ENCODE measurements at regions of chr10 and their contacts with region 1.

Region 1: DNA sequence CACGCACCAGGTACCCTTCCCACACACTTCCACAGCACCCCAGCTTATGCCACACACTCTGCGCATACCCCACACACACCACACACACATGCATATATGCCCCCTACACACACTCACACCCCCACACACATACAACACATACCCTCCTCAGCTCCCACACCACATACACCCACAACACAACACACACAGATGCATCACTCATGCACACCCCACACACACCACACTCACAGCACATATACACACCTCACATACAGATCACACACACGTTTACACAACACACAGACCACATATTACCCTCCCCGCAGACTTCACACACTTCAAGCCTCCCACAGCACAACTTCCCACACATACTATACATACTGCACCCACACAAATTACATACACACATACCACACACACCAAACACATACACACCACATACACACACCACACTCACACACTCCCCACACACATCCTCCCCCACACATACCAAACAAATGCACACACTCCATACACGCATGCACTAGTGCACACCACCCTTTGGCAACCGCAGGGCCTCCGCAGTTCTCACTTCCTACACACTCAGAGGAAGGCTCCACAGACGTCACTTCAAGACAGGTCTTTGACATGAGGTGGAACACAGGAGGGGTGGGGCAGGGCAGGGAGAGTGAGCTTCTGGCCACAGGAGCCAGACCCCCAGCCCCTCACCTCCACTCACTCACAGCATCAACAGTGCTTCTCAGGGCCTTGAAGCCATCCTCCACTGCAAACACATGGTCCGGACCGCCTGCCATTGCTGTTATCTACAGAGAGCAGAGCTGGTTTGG is 18.5 kb upstream of the ANTXRL start:
- DNase-seq: peak in 8 of 9 donors; percentile 31 to 80 (median 62)
- ATAC-seq: peak; percentile 90
- H3K4me3 ChIP-seq: peak overlapping the region; percentile 84
- H3K4me3 Mint-ChIP-seq: no peak overlapping the region
- H3K27ac ChIP-seq: peak overlapping the region; percentile 86
- H3K27ac Mint-ChIP-seq: no peak overlapping the region
- H3K4me1 ChIP-seq: peaks cover 42 to 56% of the 10 kb centered on the region in 2 donors
- H3K4me1 Mint-ChIP-seq: peaks cover 34 to 61% (median 54%) of the 10 kb centered on the region in 7 donors
- H3K27me3 ChIP-seq: no peaks in the 10 kb centered on the region
- H3K27me3 Mint-ChIP-seq: no peaks in the 10 kb centered on the region

Region 2: GRCh38 chr10:46022978-46023702 is 245.1 kb before region 1 on chr10:
- CTCF ChIA-PET with region 1: no interaction called
- POLR2A ChIA-PET with region 1: no interaction called
- intact Hi-C with region 1: loop called in 1 of 2 experiments (anchors 5 kb)
- DNase-seq: peak; percentile 59 to 85 (median 65)
- ATAC-seq: peak; percentile 96
- H3K4me3 ChIP-seq: peak overlapping the region; percentile 60
- H3K4me3 Mint-ChIP-seq: peak overlapping the region; percentile 78 to 95 (median 90)
- H3K27ac ChIP-seq: peak overlapping the region; percentile 75
- H3K27ac Mint-ChIP-seq: peak overlapping the region; percentile 51 to 95 (median 80)
- H3K4me1 ChIP-seq: peaks cover 38 to 55% of the 10 kb centered on the region in 2 donors
- H3K4me1 Mint-ChIP-seq: peaks cover 64 to 100% (median 94%) of the 10 kb centered on the region in 7 donors
- H3K27me3 ChIP-seq: no peaks in the 10 kb centered on the region
- H3K27me3 Mint-ChIP-seq: no peaks in the 10 kb centered on the region

Region 3: GRCh38 chr10:46106410-46107255 is 161.6 kb before region 1 on chr10:
- CTCF ChIA-PET with region 1: no interaction called
- POLR2A ChIA-PET with region 1: no interaction called
- intact Hi-C with region 1: no loop called
- DNase-seq: peak in 8 of 9 donors; percentile 34 to 67 (median 40)
- ATAC-seq: peak; percentile 95
- H3K4me3 ChIP-seq: peak overlapping the region; percentile 54
- H3K4me3 Mint-ChIP-seq: peak overlapping the region; percentile 82 to 98 (median 91)
- H3K27ac ChIP-seq: peak overlapping the region; percentile 72
- H3K27ac Mint-ChIP-seq: peak overlapping the region in 8 of 9 donors; percentile 1 to 93 (median 76)
- H3K4me1 ChIP-seq: peaks cover 6 to 7% of the 10 kb centered on the region in 2 donors
- H3K4me1 Mint-ChIP-seq: peaks cover 10 to 23% (median 17%) of the 10 kb centered on the region in 7 donors
- H3K27me3 ChIP-seq: no peaks in the 10 kb centered on the region
- H3K27me3 Mint-ChIP-seq: peaks cover 0 to 30% (median 0%) of the 10 kb centered on the region in 5 donors

Region 4: GRCh38 chr10:46228563-46229071 is 39.7 kb before region 1 on chr10:
- CTCF ChIA-PET with region 1: no interaction called
- POLR2A ChIA-PET with region 1: no interaction called
- intact Hi-C with region 1: loop called in 1 of 2 experiments (anchors 5 kb)
- DNase-seq: peak in 8 of 9 donors; percentile 27 to 68 (median 54)
- ATAC-seq: no peak
- H3K4me3 ChIP-seq: no peak overlapping the region
- H3K4me3 Mint-ChIP-seq: no peak overlapping the region
- H3K27ac ChIP-seq: no peak overlapping the region
- H3K27ac Mint-ChIP-seq: peak overlapping the region in 2 of 9 donors; percentile 47 to 56
- H3K4me1 ChIP-seq: no peaks in the 10 kb centered on the region
- H3K4me1 Mint-ChIP-seq: peaks cover 7 to 32% (median 19%) of the 10 kb centered on the region in 7 donors
- H3K27me3 ChIP-seq: no peaks in the 10 kb centered on the region
- H3K27me3 Mint-ChIP-seq: no peaks in the 10 kb centered on the region

Region 5: DNA sequence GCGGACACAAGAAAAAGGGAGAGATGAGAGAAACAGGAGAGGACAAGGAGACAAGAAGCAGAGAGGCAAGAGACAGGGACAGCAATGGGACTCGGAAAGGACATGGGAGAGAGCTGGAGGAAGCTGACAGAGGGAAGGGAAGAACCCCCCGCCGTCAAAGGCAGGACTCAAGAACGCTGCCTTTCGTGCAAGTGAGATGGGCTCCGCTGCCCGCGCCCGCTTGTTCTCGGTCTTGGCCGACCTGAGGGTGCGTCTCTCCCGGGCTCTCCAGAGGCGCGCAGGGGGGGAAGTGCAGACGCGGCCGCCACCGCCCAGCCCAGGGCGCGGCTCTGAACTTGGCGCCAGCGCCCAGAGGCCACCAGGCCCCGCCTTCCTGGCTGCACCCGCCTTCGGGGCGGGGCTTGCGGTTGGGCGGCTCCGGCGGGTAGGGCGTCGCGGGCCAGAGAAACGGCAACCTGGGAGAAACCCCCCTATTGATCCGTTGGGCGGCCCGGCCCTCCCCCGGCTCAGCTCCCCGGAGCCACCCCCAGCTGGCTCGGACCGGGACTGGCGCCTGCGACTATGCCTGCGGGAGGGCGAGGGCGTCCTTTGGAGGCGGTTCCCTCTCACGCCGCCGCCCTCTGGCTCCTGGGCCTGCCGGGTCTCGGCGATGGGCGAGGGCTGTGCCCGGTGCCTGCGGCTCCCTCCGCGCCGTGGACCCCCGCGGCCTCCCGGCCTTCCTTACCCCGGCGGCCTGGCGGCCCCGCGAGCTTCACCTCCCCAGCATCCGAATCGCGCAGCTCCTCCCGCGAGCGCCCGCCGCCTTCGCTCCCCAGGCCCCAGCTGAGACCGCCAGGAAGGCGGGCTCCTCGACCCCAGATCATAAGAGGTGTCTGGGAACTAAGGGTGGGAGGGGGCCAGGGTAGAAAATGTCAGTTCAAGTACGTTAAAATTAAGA is 16.3 kb after region 1 on chr10:
- CTCF ChIA-PET with region 1: no interaction called
- POLR2A ChIA-PET with region 1: interaction called, 33 read pairs
- intact Hi-C with region 1: loop called (anchors 1 kb)
- DNase-seq: peak; percentile 48 to 91 (median 65)
- ATAC-seq: peak; percentile 90
- H3K4me3 ChIP-seq: peak overlapping the region; percentile 58
- H3K4me3 Mint-ChIP-seq: peak overlapping the region; percentile 85 to 99 (median 93)
- H3K27ac ChIP-seq: peak overlapping the region; percentile 65
- H3K27ac Mint-ChIP-seq: peak overlapping the region; percentile 68 to 92 (median 86)
- H3K4me1 ChIP-seq: peaks cover 0 to 4% of the 10 kb centered on the region in 2 donors
- H3K4me1 Mint-ChIP-seq: peaks cover 14 to 35% (median 19%) of the 10 kb centered on the region in 7 donors
- H3K27me3 ChIP-seq: no peaks in the 10 kb centered on the region
- H3K27me3 Mint-ChIP-seq: peaks cover 0 to 34% (median 0%) of the 10 kb centered on the region in 5 donors

Region 6: GRCh38 chr10:46325023-46325422 is 56.7 kb after region 1 on chr10:
- CTCF ChIA-PET with region 1: no interaction called
- POLR2A ChIA-PET with region 1: no interaction called
- intact Hi-C with region 1: loop called in 1 of 2 experiments (anchors 1 kb)
- DNase-seq: peak in 5 of 9 donors; percentile 9 to 39 (median 25)
- ATAC-seq: peak; percentile 38
- H3K4me3 ChIP-seq: no peak overlapping the region
- H3K4me3 Mint-ChIP-seq: no peak overlapping the region
- H3K27ac ChIP-seq: no peak overlapping the region
- H3K27ac Mint-ChIP-seq: no peak overlapping the region
- H3K4me1 ChIP-seq: no peaks in the 10 kb centered on the region
- H3K4me1 Mint-ChIP-seq: no peaks in the 10 kb centered on the region
- H3K27me3 ChIP-seq: no peaks in the 10 kb centered on the region
- H3K27me3 Mint-ChIP-seq: peaks cover 0 to 34% (median 0%) of the 10 kb centered on the region in 5 donors

Region 7: GRCh38 chr10:47253651-47254375 is 985.5 kb after region 1 on chr10:
- CTCF ChIA-PET with region 1: no interaction called
- POLR2A ChIA-PET with region 1: no interaction called
- intact Hi-C with region 1: no loop called
- DNase-seq: no peak
- ATAC-seq: no peak
- H3K4me3 ChIP-seq: no peak overlapping the region
- H3K4me3 Mint-ChIP-seq: no peak overlapping the region
- H3K27ac ChIP-seq: no peak overlapping the region
- H3K27ac Mint-ChIP-seq: peak overlapping the region in 1 of 9 donors; percentile 100
- H3K4me1 ChIP-seq: peaks cover 19 to 36% of the 10 kb centered on the region in 2 donors
- H3K4me1 Mint-ChIP-seq: peaks cover 24 to 66% (median 57%) of the 10 kb centered on the region in 7 donors
- H3K27me3 ChIP-seq: no peaks in the 10 kb centered on the region
- H3K27me3 Mint-ChIP-seq: no peaks in the 10 kb centered on the region